ENCODE measurements at regions of chr3 and their contacts with region 1.

Region 1: DNA sequence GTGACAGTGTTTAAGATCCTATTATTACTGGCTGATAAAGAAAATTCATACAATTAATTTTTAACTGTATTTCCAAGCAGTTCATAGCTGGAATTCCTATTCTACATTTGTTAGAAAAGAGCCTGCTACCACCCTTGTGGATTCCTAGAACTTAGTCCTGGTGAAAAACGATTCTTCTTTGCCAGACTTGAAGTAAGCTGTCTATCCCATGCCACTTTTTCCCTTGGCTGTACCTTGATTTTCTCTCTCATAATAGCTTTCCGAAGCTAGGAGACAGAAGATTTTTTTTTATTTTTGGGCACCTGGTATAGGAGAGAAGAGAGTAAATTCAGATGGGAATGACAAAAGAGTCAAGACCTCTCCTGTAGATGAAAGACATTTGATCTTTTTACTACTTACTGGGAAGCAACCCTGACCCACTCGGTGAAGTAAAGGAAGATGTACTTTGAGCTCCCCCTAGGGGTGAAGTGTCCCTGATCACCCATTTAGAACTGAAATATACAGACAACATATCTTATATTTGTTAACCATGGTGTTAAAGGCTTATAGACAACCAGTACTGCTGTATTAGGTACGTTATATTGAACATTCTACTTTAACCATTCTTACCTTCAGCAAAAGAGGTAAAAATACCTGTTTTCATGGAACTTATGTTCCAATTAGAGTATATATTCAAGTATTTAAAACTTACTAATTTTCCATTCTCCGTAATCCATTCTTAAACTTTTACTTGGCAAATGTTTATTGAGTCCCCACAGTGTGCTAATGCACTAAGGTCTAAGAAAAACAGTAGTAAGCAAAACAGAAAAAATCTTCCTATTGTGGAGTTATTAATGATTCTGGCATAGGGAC is 36.2 kb upstream of the C3orf38 start:
- DNase-seq: peak; percentile 64
- ATAC-seq: peak; percentile 64
- H3K4me3 Mint-ChIP-seq: no peak overlapping the region
- H3K27ac Mint-ChIP-seq: no peak overlapping the region
- H3K4me1 Mint-ChIP-seq: peaks cover 27% of the 10 kb centered on the region
- H3K27me3 Mint-ChIP-seq: no peaks in the 10 kb centered on the region

Region 2: GRCh38 chr3:87563712-87564111 is 549.8 kb before region 1 on chr3:
- CTCF ChIA-PET with region 1: no interaction called
- POLR2A ChIA-PET with region 1: no interaction called
- intact Hi-C with region 1: no loop called
- DNase-seq: no peak
- ATAC-seq: no peak
- H3K4me3 Mint-ChIP-seq: no peak overlapping the region
- H3K27ac Mint-ChIP-seq: no peak overlapping the region
- H3K4me1 Mint-ChIP-seq: no peaks in the 10 kb centered on the region
- H3K27me3 Mint-ChIP-seq: peaks cover 2% of the 10 kb centered on the region

Region 3: DNA sequence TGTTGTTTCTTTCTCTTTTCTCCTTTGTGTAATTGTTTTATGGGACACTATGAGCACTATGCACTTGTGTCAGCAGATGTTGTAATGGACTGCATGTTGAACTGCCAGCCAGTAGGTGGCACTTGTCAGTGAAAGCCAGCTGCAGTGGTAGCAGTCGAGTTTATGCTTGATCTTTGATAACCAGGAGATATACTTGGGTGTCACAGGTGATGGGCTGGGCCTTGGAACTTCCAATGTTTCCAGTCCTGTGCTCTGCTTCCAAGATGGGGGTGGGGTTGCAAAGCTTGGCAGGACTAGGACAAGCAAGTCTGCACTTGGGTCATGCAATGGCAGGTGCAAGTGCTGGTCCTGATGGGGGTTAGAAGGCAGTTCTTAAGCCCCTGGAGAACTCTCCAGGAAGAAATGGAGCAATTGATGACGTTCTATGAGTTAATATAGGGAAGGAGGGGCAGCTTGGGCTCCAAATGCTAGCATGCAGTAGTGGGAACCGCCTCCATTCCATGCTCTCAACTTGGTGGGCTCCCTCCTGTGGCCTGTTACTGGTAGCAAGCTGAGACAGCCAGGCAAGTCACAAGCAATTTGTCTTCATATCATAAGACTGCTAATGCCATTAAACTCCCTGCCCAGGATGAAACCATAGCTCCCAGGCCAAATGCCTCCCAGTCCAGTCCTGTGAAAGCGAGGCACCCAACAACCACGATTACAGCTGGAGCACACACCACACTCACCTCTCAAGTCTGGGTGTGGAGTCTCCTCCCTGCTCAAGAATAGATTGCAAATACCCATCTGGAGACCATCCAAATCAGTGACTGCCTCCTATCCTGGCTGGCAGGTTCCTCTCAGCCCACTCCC is 342.0 kb before region 1 on chr3:
- CTCF ChIA-PET with region 1: interaction called, 9 read pairs
- POLR2A ChIA-PET with region 1: no interaction called
- intact Hi-C with region 1: loop called (anchors 1 kb)
- DNase-seq: peak; percentile 58
- ATAC-seq: peak; percentile 90
- H3K4me3 Mint-ChIP-seq: no peak overlapping the region
- H3K27ac Mint-ChIP-seq: no peak overlapping the region
- H3K4me1 Mint-ChIP-seq: no peaks in the 10 kb centered on the region
- H3K27me3 Mint-ChIP-seq: peaks cover 3% of the 10 kb centered on the region

Region 4: GRCh38 chr3:88031642-88032077 is 81.9 kb before region 1 on chr3:
- CTCF ChIA-PET with region 1: interaction called, 7 read pairs
- POLR2A ChIA-PET with region 1: no interaction called
- intact Hi-C with region 1: loop called in 1 of 2 experiments (anchors 5 kb)
- DNase-seq: peak; percentile 29
- ATAC-seq: peak; percentile 88
- H3K4me3 Mint-ChIP-seq: peak overlapping the region; percentile 68
- H3K27ac Mint-ChIP-seq: peak overlapping the region; percentile 80
- H3K4me1 Mint-ChIP-seq: peaks cover 32% of the 10 kb centered on the region
- H3K27me3 Mint-ChIP-seq: no peaks in the 10 kb centered on the region

Region 5: DNA sequence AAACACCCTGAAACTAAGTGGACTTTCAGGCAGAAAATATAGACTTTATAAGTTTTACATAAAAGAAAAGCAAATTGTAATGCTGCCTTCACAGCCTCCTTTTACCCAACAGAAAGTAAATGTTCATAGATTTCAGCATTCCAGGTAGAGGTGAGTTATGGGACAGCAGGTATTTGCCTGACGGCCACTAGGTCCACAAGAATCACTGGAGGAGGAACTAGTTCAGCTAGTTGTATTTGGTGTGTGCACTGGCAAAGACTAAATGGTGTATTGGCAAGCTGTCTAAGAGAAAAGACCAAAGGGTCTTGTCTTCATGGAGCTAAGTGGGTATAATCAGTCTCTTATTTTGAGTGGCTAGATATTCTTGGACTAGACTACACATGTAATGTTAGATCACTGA is 20.3 kb before region 1 on chr3:
- CTCF ChIA-PET with region 1: interaction called, 10 read pairs
- POLR2A ChIA-PET with region 1: no interaction called
- intact Hi-C with region 1: no loop called
- DNase-seq: no peak
- ATAC-seq: no peak
- H3K4me3 Mint-ChIP-seq: no peak overlapping the region
- H3K27ac Mint-ChIP-seq: no peak overlapping the region
- H3K4me1 Mint-ChIP-seq: peaks cover 3% of the 10 kb centered on the region
- H3K27me3 Mint-ChIP-seq: no peaks in the 10 kb centered on the region

Measured in activated CD4-positive, alpha-beta T cell treated with anti-CD3 and anti-CD28 coated beads for 36 hours (primary cell).